AG04449 (cell line): ENCODE measurements at regions of chr6 and their contacts with region 1.

Region 1: DNA sequence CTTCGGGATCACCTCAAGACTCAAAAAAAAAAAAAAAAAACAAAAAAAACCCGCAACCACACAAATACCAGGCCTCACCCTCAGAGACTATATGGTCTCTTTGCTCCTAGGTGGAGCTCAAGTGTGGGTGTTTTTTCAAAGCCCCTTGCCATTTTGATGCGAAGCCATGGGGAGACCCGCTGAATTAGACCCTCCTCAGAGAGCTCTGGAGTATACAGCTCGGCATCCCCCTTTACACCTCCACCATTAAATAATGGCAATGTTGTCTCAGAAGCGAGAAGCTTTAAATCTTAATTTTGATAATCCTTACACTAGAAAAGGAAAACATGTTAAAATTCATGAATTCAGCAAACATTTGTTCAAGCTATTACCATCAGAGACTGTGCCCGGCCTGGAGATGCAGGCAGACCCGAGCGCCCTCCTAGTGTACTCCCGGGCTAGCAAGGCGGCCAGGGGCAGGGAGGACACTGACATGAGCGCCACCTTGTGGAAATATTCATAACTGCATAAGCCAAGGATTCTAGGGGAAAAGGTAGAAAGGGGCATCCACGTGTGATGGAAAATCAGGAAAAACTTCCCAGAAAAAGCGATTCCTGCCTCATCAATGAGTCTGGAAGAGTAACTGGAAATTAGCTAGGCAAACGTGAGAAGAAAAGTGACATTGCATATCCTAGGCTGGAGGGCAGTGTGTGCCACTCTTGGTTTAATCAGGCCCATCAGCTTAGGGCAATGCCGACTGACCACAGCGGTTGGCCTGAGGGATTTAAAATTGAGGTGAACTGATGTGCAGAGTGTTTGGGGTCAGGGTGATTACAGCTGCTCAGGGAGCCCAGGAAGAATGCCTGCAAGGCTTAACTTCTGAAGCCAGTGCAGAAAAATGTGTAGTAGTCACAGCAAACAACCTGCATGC is 72.5 kb downstream of the B3GAT2 start:
- DNase-seq: no peak
- H3K4me3 ChIP-seq: no peak overlapping the region
- CTCF ChIP-seq: peak; percentile 83

Region 2: DNA sequence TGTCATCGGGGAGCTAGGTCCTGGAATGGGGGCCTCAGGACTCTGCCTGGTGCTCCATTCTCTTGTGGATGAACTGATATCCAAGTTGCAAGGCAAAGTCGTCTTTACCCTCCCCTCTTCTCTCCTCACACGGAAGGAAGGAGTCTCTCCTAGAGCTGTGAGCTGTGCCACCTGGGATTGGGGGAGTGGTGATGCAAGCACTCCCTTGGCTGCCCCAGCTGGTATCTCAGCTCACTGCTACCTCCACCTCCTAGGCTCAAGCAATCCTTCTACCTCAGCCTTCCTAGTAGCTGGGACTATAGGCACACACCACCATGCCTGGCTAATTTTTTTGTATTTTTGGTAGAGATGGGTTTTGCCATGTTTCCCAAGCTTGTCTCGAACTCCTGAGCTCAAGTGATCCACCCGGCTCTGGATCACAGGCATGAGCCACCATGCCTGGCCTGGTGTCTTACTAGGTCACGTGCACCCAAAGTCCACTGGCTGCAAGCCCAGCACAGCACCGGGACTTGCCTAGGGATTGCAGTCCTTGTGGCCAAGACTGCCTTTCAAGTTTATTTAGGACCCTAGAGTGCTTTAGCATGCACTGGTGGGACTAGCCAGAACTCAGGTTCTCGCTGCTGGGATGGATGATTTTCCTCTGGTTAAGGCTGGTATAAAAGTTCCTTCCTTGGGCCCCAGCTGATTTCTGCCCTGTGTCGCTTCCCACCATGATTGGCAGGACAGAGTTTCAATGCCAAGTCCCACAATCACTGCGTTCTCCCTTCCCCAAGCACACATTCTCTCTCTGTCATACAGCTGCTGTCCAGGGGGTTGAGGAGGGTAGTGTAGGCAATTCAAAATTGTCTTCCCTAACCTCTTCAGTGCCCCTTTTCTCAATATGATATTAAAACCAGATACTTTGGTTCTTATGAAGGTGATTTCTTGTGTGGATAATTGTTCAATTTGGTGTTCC is 183.1 kb before region 1 on chr6:
- CTCF ChIA-PET with region 1: interaction called, 80 read pairs
- POLR2A ChIA-PET with region 1: no interaction called
- DNase-seq: no peak
- H3K4me3 ChIP-seq: no peak overlapping the region
- CTCF ChIP-seq: no peak

Region 3: GRCh38 chr6:70706491-70707123 is 177.7 kb before region 1 on chr6:
- CTCF ChIA-PET with region 1: interaction called, 164 read pairs
- POLR2A ChIA-PET with region 1: no interaction called
- DNase-seq: no peak
- H3K4me3 ChIP-seq: no peak overlapping the region
- CTCF ChIP-seq: no peak

Region 4: GRCh38 chr6:70860920-70861319 is 23.4 kb before region 1 on chr6:
- CTCF ChIA-PET with region 1: interaction called, 11 read pairs
- POLR2A ChIA-PET with region 1: no interaction called
- DNase-seq: no peak
- H3K4me3 ChIP-seq: no peak overlapping the region
- CTCF ChIP-seq: no peak

Region 5: GRCh38 chr6:70901326-70901725 is 17.0 kb after region 1 on chr6:
- CTCF ChIA-PET with region 1: interaction called, 21 read pairs
- POLR2A ChIA-PET with region 1: no interaction called
- DNase-seq: no peak
- H3K4me3 ChIP-seq: no peak overlapping the region
- CTCF ChIP-seq: peak; percentile 3

Region 6: GRCh38 chr6:70955441-70956190 is 71.3 kb after region 1 on chr6:
- CTCF ChIA-PET with region 1: no interaction called
- POLR2A ChIA-PET with region 1: no interaction called
- DNase-seq: no peak
- H3K4me3 ChIP-seq: peak overlapping the region; percentile 46
- CTCF ChIP-seq: peak; percentile 98